Pancreas (tissue), 10 donors: ENCODE measurements at regions of chr1 and their contacts with region 1.

Region 1: DNA sequence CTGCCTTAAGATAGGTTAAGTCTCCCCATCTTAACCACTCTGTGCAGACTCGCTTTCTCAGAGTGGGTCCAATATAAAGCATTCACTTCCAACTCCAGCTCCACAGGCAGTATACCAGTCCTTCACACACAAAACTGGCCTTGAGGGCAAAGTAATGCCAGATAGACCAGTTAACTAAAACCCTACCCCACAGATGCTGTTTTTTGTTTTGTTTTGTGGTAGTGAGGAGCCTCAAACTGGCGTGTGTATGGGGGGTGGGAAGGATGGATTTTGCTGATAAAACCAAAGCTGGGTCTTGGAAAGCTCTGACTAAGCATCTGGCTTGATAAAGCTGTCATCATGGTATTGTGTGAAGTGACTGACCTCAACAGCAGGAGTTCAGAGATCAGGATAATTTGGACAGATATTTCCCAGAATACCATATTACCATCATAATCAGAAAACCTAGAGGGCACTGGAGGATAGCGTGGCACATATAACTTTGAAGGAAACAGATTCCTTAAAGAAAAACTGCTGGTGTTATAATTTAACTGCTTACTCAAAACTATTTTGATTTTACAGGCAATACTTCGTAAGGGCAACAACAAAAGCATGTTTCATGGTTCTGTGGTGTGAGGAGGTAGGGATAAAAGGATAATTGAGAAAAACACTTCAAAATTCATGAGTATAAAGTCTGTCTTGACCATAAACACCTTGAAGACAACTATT is 29.6 kb upstream of the CPLANE2 start:
- DNase-seq: no peak
- ATAC-seq: peak in 1 of 4 donors; percentile 32
- H3K4me3 ChIP-seq: no peak overlapping the region
- H3K27ac ChIP-seq: no peak overlapping the region
- H3K4me1 ChIP-seq: peaks cover 0 to 11% (median 4%) of the 10 kb centered on the region in 3 donors
- H3K27me3 ChIP-seq: no peaks in the 10 kb centered on the region
- CTCF ChIP-seq: no peak

Region 2: GRCh38 chr1:16243936-16244649 is 22.5 kb before region 1 on chr1:
- intact Hi-C with region 1: no loop called
- DNase-seq: peak; percentile 75 to 90 (median 84)
- ATAC-seq: peak; percentile 44 to 78 (median 72)
- H3K4me3 ChIP-seq: no peak overlapping the region
- H3K27ac ChIP-seq: peak overlapping the region in 2 of 4 donors; percentile 9 to 28
- H3K4me1 ChIP-seq: peaks cover 21 to 30% (median 23%) of the 10 kb centered on the region in 3 donors
- H3K27me3 ChIP-seq: no peaks in the 10 kb centered on the region
- CTCF ChIP-seq: peak; percentile 76 to 87 (median 80)

Region 3: GRCh38 chr1:16334655-16335340 is 68.2 kb after region 1 on chr1:
- intact Hi-C with region 1: no loop called
- DNase-seq: no peak
- ATAC-seq: peak; percentile 54 to 66 (median 64)
- H3K4me3 ChIP-seq: no peak overlapping the region
- H3K27ac ChIP-seq: peak overlapping the region in 2 of 4 donors; percentile 21 to 44
- H3K4me1 ChIP-seq: peaks cover 0 to 4% (median 4%) of the 10 kb centered on the region in 3 donors
- H3K27me3 ChIP-seq: no peaks in the 10 kb centered on the region
- CTCF ChIP-seq: no peak

Region 4: DNA sequence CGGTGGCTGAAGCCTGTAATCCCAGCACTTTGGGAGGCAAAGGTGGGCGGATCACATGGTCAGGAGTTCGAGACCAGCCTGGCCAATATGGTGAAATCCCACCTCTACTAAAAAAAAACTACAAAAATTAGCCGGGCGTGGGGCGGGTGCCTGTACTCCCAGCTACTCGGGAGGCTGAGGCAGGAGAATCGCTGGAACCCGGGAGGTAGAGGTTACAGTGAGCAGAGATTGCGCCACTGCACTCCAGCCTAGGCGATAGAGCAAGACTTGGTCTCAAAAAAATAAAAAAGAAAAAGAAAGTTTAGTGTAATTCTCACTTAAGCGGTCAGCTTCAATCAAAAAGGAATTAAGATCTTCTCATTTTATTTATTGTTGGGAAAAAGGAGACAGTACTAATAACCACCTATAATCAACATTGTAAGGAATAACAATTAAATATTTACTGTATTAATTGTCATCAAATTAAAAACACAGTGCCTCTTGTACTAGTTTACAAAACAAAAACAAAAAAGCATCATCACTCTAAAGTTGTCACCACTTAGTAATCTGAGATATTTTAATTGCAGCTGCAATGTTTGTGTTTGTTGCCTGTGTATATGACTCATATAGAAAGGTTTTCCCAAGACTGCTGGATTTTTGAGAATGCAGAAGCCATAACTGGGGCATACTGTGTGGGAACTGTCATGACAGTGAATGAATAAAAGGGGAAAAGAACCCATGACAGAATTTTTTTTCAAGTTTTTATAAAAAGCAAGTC is 82.0 kb after region 1 on chr1:
- intact Hi-C with region 1: loop called in 1 of 3 experiments (anchors 10 kb)
- DNase-seq: no peak
- ATAC-seq: no peak
- H3K4me3 ChIP-seq: no peak overlapping the region
- H3K27ac ChIP-seq: no peak overlapping the region
- H3K4me1 ChIP-seq: peaks cover 4 to 23% (median 9%) of the 10 kb centered on the region in 3 donors
- H3K27me3 ChIP-seq: no peaks in the 10 kb centered on the region
- CTCF ChIP-seq: no peak